Activated CD4-positive, alpha-beta T cell treated with anti-CD3 and anti-CD28 coated beads, Interleukin-2, amount 10 ng/mL, durations not matched to agents 24 days and 14 days (primary cell): ENCODE measurements at regions of chr20 and their contacts with region 1.

Region 1: DNA sequence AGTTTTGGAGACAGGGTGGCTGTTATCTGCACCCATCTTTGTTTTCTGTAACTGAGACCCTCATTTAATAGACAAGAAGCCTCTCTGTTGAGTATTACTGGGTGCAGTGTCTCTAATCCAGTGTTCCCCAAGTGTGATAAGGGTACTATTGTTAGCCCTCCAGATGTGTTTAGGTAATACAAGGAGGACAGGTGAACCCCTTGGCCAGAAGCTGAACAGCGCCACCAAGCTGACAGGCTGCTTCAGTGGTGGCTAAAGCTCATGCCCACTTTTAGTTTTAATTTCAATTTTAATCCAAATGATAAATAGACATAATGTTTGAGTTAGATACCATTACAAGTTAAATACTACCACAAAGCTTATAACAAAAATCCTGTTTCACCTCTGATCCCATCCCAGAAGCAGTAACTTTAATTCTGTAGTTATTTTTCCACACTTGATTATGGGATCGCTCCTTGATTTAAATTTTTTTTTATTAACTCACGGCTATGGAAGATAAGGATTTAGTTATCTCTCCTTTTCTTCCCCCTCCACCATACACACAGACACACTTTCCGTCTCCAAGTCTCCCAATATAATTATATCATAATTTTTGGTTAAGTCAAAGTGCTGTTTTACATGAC is 8.4 kb upstream of the STK35 start:
- DNase-seq: peak; percentile 75
- H3K4me3 Mint-ChIP-seq: no peak overlapping the region
- H3K27ac Mint-ChIP-seq: no peak overlapping the region
- H3K4me1 Mint-ChIP-seq: peaks cover 2% of the 10 kb centered on the region
- H3K27me3 Mint-ChIP-seq: peaks cover 46% of the 10 kb centered on the region

Region 2: GRCh38 chr20:2005831-2006426 is 87.3 kb before region 1 on chr20:
- intact Hi-C with region 1: loop called (anchors 1 kb)
- DNase-seq: peak; percentile 92
- H3K4me3 Mint-ChIP-seq: no peak overlapping the region
- H3K27ac Mint-ChIP-seq: no peak overlapping the region
- H3K4me1 Mint-ChIP-seq: peaks cover 2% of the 10 kb centered on the region
- H3K27me3 Mint-ChIP-seq: peaks cover 2% of the 10 kb centered on the region